A673 (cell line): ENCODE measurements at regions of chr21 and their contacts with region 1.

Region 1: DNA sequence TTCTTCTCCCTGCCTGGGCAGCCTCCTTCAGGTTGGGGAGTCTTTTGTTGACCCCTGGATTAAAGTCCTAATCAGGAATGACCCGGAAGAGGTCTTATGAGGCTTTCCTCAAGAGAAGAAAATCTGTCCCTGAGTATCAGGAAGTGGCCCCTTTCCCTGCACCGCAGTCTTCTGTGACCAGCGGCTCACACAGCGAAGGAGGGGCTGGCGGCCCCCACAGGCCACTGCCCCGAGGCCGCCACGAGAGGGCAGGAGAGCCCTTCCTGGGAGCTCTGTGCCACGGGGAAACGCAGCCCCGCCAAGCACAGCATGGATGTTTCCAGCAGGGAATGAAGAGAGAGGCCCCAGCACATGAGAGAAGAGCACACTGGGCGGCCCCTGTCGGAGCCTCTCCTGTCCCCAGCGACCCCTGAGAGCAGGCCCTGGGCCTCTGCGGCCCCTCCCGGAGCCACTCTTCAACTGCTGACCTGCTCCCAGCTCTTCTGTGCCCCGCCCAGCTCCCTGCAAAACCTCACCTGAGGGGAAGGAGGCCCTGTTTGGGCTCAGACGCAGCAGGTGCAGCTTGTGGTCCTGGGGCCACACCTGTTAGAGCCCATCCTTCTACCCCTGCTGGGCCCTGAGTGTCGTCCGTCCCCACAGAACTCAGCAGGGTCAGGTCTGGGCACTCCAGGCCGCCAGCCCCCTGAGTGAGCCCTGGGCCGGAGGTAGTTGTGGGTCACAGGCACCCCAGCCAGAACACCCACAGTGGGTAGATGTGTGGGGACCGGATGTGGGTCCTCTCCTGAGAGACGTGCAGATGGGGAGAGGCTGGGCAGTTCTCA is 4.9 kb upstream of the POFUT2 start:
- DNase-seq: peak; percentile 89
- H3K4me3 ChIP-seq: no peak overlapping the region
- H3K27ac ChIP-seq: peak overlapping the region; percentile 64
- H3K4me1 ChIP-seq: peaks cover 4% of the 10 kb centered on the region
- H3K27me3 ChIP-seq: no peaks in the 10 kb centered on the region
- CTCF ChIP-seq: peak; percentile 94

Region 2: GRCh38 chr21:45167796-45168222 is 124.8 kb before region 1 on chr21:
- CTCF ChIA-PET with region 1: no interaction called
- POLR2A ChIA-PET with region 1: no interaction called
- intact Hi-C with region 1: no loop called
- DNase-seq: peak; percentile 9
- H3K4me3 ChIP-seq: no peak overlapping the region
- H3K27ac ChIP-seq: peak overlapping the region; percentile 83
- H3K4me1 ChIP-seq: peaks cover 31% of the 10 kb centered on the region
- H3K27me3 ChIP-seq: no peaks in the 10 kb centered on the region
- CTCF ChIP-seq: no peak

Region 3: DNA sequence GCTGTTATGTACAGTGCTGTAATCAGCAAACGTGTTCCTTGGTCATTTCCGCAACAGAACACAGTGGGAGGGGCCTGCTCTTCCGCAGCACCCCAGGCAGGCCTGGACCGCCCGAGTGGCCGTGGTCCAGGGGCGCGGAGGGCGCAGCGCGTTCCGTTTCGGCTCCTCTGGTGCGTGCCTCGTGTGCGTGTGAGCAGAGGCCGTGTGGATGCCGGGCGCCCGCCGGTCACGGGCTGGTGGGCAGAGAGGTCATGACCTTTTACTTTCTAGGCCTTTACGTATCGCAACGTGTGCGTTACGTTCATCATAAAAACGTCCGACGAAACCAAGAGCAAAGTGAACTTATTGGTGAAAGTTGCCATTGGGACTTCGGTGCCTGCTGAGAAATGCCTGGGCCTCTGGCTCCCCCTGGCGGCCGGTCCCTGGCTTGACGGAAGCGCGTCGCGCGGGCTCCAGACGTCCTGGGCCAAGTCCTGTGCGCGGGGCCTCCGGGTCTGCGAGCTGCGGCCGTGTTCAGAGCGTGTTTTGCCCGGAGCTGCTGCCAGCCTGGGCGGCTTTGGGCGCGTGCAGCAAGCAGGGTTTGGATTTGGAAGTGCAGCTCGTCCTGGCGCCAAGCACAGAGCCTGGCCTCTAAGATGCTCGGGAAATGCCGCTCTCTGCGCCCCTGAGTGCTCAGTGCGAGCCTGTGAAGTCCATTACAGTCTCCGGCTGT is 146.7 kb after region 1 on chr21:
- CTCF ChIA-PET with region 1: interaction called, 6 read pairs
- POLR2A ChIA-PET with region 1: no interaction called
- intact Hi-C with region 1: loop called (anchors 1 kb)
- DNase-seq: peak; percentile 85
- H3K4me3 ChIP-seq: peak overlapping the region; percentile 40
- H3K27ac ChIP-seq: no peak overlapping the region
- H3K4me1 ChIP-seq: peaks cover 6% of the 10 kb centered on the region
- H3K27me3 ChIP-seq: no peaks in the 10 kb centered on the region
- CTCF ChIP-seq: peak; percentile 94